ENCODE measurements at regions of chr21 and their contacts with region 1.

Region 1: GRCh38 chr21:34745557-34746255 is 76.9 kb downstream of the CLIC6 start:
- DNase-seq: peak in 1 of 2 donors; percentile 83
- H3K4me3 ChIP-seq: no peak overlapping the region
- H3K27ac ChIP-seq: no peak overlapping the region
- H3K4me1 ChIP-seq: no peaks in the 10 kb centered on the region
- H3K27me3 ChIP-seq: no peaks in the 10 kb centered on the region
- CTCF ChIP-seq: peak; percentile 77 to 88 (median 85)

Region 2: DNA sequence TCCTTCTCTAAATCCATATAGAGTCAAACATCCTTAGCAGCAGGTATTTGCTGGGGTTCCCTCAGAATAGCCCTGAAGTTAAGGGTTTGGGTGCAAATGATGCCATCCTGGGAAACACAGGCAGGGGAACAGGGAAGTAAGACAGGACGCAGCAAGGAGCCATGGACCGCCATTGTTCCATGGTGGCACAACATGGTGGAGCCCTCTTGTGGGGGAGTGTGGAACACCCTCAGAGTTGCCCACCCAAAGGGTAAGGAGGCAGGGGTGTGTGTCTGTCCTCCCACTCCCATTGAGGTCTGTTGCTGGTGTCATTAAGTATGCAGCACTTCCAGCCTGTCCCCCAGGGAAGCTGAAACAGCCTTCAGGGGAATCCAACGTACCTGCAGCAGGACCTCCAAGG is 110.4 kb before region 1 on chr21:
- intact Hi-C with region 1: no loop called
- DNase-seq: no peak
- H3K4me3 ChIP-seq: no peak overlapping the region
- H3K27ac ChIP-seq: no peak overlapping the region
- H3K4me1 ChIP-seq: no peaks in the 10 kb centered on the region
- H3K27me3 ChIP-seq: no peaks in the 10 kb centered on the region
- CTCF ChIP-seq: peak in 1 of 3 experiments; percentile 6

Region 3: DNA sequence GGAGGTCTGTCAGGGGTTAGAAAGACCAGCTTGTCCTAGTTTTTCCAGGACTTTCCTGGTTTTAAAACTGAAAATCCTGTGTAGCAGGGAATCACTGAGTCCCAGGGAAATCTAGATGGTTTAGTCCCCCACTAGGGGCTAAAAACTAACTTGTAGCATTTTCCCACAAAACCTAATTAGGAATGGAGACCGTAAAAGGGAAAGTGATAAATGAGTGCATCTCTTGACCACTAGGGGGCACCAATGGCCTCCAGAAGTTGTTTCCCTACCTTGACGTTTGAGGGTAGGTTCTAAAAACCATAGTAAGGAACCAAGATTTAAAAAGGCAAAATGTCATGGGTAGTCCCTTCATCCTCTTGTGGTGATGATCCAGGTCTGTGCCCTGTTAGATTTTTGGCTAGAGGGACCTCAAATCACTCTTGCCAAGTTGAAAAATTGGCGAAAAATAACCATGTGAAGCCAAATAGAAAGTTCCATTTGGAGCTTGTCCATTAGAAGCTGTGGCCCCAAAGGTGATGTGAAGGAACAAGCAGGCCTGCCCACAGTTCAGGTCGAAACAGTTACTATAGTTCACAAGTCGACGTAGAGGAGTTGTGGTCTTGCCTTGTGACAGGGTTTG is 52.4 kb before region 1 on chr21:
- intact Hi-C with region 1: loop called (anchors 2 kb)
- DNase-seq: no peak
- H3K4me3 ChIP-seq: no peak overlapping the region
- H3K27ac ChIP-seq: no peak overlapping the region
- H3K4me1 ChIP-seq: no peaks in the 10 kb centered on the region
- H3K27me3 ChIP-seq: no peaks in the 10 kb centered on the region
- CTCF ChIP-seq: peak; percentile 51 to 60 (median 60)

Region 4: DNA sequence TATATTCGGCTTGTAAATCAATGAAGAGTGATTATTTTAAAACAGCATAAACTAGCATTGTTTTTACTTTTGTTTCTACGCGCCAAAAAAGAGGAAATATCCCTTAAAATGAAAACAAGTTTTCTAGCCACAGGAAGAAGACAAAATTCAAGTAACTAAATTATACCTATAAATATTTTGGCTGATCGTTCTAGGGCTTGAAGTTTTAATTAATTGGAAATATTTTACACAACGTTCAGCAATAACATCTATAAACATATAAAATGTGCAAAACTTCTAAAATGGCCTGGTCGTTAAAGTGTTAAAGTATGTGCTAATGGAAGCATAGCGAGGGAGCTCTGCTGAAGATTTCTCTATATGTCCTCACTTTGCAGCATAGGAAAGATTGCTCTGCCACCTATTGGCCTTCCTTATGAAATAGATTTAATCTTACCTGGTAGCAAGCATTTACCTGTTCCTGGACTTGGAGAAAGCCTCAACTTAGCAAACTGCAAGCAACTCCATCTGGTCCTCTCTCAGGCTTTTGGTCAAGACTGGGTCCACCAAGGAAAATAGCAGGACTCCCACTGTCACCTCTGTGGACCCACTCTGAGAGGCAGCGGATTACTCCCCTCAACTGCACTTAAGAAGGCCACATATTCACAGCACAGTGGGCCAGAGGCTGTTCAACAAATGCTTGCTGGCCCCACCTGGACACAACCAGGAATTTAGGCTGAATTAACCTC is 654.7 kb after region 1 on chr21:
- intact Hi-C with region 1: loop called (anchors 2 kb)
- DNase-seq: no peak
- H3K4me3 ChIP-seq: no peak overlapping the region
- H3K27ac ChIP-seq: no peak overlapping the region
- H3K4me1 ChIP-seq: no peaks in the 10 kb centered on the region
- H3K27me3 ChIP-seq: no peaks in the 10 kb centered on the region
- CTCF ChIP-seq: peak in 2 of 3 experiments; percentile 37 to 48

Region 5: DNA sequence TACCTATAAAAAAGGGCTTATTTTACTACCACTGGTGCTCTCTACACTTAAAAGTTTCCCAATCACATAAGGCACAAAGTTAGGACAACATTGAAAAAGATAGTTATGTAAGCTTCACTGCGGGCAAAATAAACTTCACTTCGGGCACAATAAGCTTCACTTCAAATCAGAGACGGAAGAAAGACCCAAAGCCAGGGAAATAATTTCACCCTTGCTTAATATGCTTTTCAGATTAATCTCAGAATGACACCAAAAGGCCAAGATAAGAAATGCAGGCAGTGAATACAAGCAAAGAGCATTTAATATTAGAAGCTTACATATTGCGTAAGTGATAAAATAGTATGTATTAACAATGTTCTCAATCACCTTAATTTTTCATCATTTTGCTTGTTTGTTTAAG is 870.4 kb after region 1 on chr21:
- intact Hi-C with region 1: loop called (anchors 10 kb)
- DNase-seq: no peak
- H3K4me3 ChIP-seq: no peak overlapping the region
- H3K27ac ChIP-seq: no peak overlapping the region
- H3K4me1 ChIP-seq: no peaks in the 10 kb centered on the region
- H3K27me3 ChIP-seq: no peaks in the 10 kb centered on the region
- CTCF ChIP-seq: peak; percentile 30 to 53 (median 42)

Region 6: GRCh38 chr21:35840197-35840799 is 1094.6 kb after region 1 on chr21:
- intact Hi-C with region 1: loop called (anchors 2 kb)
- DNase-seq: peak in 1 of 2 donors; percentile 79
- H3K4me3 ChIP-seq: no peak overlapping the region
- H3K27ac ChIP-seq: no peak overlapping the region
- H3K4me1 ChIP-seq: peaks cover 0 to 8% of the 10 kb centered on the region in 2 donors
- H3K27me3 ChIP-seq: no peaks in the 10 kb centered on the region
- CTCF ChIP-seq: peak; percentile 65 to 84 (median 66)

Region 7: GRCh38 chr21:35940074-35940927 is 1194.6 kb after region 1 on chr21:
- intact Hi-C with region 1: loop called (anchors 5 kb)
- DNase-seq: peak in 1 of 2 donors; percentile 72
- H3K4me3 ChIP-seq: no peak overlapping the region
- H3K27ac ChIP-seq: no peak overlapping the region
- H3K4me1 ChIP-seq: no peaks in the 10 kb centered on the region
- H3K27me3 ChIP-seq: no peaks in the 10 kb centered on the region
- CTCF ChIP-seq: peak; percentile 50 to 73 (median 63)

Region 8: DNA sequence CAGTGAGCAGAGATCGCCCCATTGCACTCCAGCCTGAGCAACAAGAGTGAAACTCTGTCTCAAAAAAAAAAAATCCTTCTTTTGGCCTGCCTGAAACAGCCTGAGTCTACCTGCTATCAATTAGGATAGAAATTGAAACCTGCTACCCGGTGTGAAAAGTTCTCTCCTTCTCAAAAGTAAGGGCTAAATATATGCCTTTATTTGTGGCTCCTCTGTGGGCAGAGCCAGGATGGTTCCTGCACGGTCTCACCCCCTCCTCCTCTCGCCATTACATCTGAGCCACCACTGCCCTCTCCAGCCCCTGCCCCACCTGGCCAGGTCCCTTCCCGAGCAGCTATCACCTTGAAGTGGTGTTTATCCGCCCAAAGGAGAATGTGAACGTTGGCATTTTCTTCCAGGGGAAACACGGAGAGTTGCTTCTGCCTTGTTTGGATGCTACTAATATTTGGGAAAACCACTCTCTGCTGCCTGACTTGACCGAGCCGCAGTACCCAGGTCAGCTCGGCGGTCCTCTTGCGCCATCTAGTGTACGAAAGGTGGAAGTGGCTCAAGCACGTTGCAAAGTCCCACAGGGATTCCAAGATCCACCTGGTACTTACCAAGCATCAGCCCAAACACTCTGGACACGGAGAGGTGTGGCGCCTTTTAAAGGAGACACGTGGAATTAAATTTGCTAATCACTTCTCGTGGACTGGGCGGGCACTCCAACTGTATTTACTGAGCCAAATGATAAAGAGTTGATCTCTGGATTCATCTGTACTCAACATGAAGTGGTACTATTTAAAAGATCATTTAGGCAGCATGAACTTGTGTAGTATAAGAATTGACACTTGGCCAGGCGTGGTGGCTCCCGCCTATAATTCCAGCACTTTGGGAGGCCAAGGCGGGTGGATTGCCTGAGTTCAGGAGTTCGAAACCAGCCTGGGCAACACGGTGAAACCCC is 1282.7 kb after region 1 on chr21:
- intact Hi-C with region 1: loop called (anchors 1 kb)
- DNase-seq: peak; percentile 17 to 84
- H3K4me3 ChIP-seq: no peak overlapping the region
- H3K27ac ChIP-seq: no peak overlapping the region
- H3K4me1 ChIP-seq: no peaks in the 10 kb centered on the region
- H3K27me3 ChIP-seq: no peaks in the 10 kb centered on the region
- CTCF ChIP-seq: peak; percentile 76 to 94 (median 91)